PC-3 (cell line): ENCODE measurements at regions of chr12 and their contacts with region 1.

Region 1: DNA sequence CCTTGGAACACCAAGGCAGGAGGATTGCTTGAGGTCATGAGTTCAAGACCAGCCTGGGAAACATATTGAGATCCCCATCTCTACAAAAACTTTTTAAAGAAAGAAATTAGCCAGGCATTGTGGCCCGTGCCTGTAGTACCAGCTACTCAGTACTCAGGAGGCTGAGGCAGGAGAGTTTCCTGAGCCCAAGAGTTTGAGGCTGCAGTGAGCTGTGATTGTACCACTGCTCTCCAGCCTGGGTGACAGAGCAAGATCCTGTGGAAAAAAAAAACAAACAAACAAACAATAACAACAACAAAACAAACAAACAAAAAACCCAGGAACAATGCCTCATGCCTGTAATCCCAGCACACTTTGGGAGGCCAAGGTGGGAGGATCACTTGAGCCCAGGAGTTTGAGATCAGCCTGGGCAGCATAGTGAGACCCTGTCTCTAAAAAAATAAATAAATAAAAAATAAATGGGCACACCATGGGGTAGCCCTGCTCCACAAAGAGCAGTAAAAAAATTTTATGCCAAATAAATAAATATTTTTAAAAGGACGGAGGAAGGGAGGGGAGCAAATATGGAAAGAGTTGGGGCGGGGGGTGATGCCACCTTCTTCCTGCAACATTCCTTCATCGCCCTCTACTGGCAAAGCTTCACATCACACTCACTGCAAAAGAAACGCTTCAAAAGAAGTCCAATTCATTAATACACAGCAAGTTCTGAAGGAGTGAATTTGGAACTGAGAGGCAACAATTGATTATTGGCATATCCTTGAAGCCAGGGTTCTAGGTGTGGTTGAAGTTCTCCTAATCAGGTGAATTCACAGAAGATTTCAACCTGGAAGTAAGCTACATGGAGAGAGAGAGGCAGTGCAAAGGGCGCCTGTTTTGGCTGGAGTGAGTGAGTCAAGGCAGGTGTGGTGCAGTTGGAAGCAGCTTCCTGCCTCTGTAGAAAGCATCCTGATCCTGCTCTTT is 8.8 kb upstream of the GNPTAB start:
- DNase-seq: peak; percentile 85
- ATAC-seq: peak; percentile 90
- H3K4me3 ChIP-seq: peak overlapping the region; percentile 24; the same call in 1 of the 2 replicates
- H3K27ac ChIP-seq: no peak overlapping the region
- H3K4me1 ChIP-seq: peaks cover 8% of the 10 kb centered on the region; the same call in 1 of the 2 replicates
- H3K27me3 ChIP-seq: no peaks in the 10 kb centered on the region
- CTCF ChIP-seq: peak; percentile 93

Region 2: DNA sequence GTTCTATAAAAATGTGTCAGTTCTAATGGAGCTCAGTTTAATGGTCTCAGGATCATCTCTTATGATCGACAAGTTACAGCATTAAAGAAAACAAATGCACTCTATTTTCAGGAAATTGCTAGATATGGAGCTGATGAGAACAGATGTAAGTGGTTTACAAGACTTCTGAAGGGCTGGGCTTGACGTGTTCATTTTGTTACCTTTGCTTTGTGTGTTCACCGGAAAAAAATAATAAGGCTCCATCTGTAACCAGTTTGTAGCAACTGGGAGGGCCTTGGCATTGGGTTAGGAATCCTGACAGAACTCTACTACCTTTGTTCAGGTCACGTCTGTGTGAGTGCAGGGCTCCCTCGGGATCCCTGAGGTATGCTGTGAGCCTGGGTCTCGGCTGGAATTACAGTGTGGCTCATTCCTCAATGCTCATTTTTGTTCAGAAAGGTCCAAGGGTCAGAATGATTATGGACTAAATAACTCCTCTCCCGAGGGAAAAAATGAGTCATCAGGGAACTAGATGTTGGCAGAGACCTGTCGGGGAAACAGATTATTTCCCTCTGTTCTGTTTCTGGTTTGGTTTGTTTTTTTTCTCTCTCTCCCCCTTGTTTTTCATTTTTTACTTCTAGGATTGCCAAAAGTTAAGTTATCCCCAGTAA is 787.6 kb before region 1 on chr12:
- CTCF ChIA-PET with region 1: no interaction called
- POLR2A ChIA-PET with region 1: no interaction called
- intact Hi-C with region 1: no loop called
- DNase-seq: peak; percentile 81
- ATAC-seq: no peak
- H3K4me3 ChIP-seq: no peak overlapping the region
- H3K27ac ChIP-seq: peak overlapping the region; percentile 60
- H3K4me1 ChIP-seq: peaks cover 9% of the 10 kb centered on the region; the same call in 1 of the 2 replicates
- H3K27me3 ChIP-seq: no peaks in the 10 kb centered on the region
- CTCF ChIP-seq: no peak

Region 3: GRCh38 chr12:101759396-101760047 is 80.1 kb before region 1 on chr12:
- CTCF ChIA-PET with region 1: no interaction called
- POLR2A ChIA-PET with region 1: no interaction called
- intact Hi-C with region 1: no loop called
- DNase-seq: peak; percentile 72
- ATAC-seq: peak; percentile 83
- H3K4me3 ChIP-seq: no peak overlapping the region
- H3K27ac ChIP-seq: no peak overlapping the region
- H3K4me1 ChIP-seq: peaks cover 4% of the 10 kb centered on the region; the same call in 1 of the 2 replicates
- H3K27me3 ChIP-seq: no peaks in the 10 kb centered on the region
- CTCF ChIP-seq: peak; percentile 92

Region 4: GRCh38 chr12:101773650-101774162 is 65.9 kb before region 1 on chr12:
- CTCF ChIA-PET with region 1: interaction called, 23 read pairs
- POLR2A ChIA-PET with region 1: no interaction called
- intact Hi-C with region 1: loop called (anchors 1 kb)
- DNase-seq: peak; percentile 81
- ATAC-seq: peak; percentile 84
- H3K4me3 ChIP-seq: no peak overlapping the region
- H3K27ac ChIP-seq: no peak overlapping the region
- H3K4me1 ChIP-seq: no peaks in the 10 kb centered on the region
- H3K27me3 ChIP-seq: no peaks in the 10 kb centered on the region
- CTCF ChIP-seq: peak; percentile 95

Region 5: GRCh38 chr12:101792051-101792931 is 47.3 kb before region 1 on chr12:
- CTCF ChIA-PET with region 1: interaction called, 8 read pairs
- POLR2A ChIA-PET with region 1: no interaction called
- intact Hi-C with region 1: loop called (anchors 1 kb)
- DNase-seq: peak; percentile 20
- ATAC-seq: peak; percentile 81
- H3K4me3 ChIP-seq: no peak overlapping the region
- H3K27ac ChIP-seq: no peak overlapping the region
- H3K4me1 ChIP-seq: no peaks in the 10 kb centered on the region
- H3K27me3 ChIP-seq: no peaks in the 10 kb centered on the region
- CTCF ChIP-seq: peak; percentile 55

Region 6: DNA sequence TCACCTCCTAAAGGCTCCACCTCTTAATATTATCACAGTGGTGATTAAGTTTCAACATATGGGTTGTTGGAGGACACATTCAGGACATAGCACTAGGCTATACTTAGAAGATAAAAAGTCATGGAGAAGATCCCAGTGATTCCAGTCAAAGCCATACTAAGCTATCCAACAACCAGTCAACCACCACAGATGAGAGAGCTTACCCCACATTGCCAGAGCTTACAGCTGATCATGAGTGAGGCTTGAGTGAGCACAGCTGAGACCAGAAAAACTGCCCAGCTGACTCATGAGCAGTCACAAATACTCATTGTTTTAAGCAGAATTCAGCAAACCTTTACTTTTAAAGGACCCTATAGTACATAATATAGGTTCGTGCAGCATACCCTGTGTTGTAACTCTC is 122.9 kb after region 1 on chr12:
- CTCF ChIA-PET with region 1: no interaction called
- POLR2A ChIA-PET with region 1: no interaction called
- intact Hi-C with region 1: no loop called
- DNase-seq: peak; percentile 27
- ATAC-seq: no peak
- H3K4me3 ChIP-seq: no peak overlapping the region
- H3K27ac ChIP-seq: no peak overlapping the region
- H3K4me1 ChIP-seq: no peaks in the 10 kb centered on the region
- H3K27me3 ChIP-seq: peaks cover 16% of the 10 kb centered on the region
- CTCF ChIP-seq: no peak

Region 7: DNA sequence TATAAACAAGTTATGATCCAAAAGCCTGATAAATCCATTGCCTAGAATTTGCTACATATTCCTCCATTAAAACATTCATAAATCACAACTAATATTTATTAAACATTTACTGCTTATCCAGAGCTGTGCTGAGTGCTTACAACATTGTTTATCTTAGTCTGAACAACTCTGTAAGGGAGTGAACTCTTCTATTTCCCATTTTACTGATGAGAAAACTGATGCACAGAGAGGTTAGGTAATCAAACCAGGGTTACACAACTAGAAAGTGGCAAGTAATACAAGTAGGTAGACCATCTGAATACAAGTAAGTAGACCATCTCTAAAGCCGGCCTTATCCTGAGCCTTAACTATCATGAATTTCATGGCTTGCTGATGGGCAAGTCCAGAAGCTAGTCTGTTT is 182.7 kb after region 1 on chr12:
- CTCF ChIA-PET with region 1: no interaction called
- POLR2A ChIA-PET with region 1: interaction called, 52 read pairs
- intact Hi-C with region 1: no loop called
- DNase-seq: no peak
- ATAC-seq: no peak
- H3K4me3 ChIP-seq: no peak overlapping the region
- H3K27ac ChIP-seq: no peak overlapping the region
- H3K4me1 ChIP-seq: no peaks in the 10 kb centered on the region
- H3K27me3 ChIP-seq: no peaks in the 10 kb centered on the region
- CTCF ChIP-seq: no peak